Gastrocnemius medialis (tissue), 4 donors: ENCODE measurements at regions of chr4 and their contacts with region 1.

Region 1: DNA sequence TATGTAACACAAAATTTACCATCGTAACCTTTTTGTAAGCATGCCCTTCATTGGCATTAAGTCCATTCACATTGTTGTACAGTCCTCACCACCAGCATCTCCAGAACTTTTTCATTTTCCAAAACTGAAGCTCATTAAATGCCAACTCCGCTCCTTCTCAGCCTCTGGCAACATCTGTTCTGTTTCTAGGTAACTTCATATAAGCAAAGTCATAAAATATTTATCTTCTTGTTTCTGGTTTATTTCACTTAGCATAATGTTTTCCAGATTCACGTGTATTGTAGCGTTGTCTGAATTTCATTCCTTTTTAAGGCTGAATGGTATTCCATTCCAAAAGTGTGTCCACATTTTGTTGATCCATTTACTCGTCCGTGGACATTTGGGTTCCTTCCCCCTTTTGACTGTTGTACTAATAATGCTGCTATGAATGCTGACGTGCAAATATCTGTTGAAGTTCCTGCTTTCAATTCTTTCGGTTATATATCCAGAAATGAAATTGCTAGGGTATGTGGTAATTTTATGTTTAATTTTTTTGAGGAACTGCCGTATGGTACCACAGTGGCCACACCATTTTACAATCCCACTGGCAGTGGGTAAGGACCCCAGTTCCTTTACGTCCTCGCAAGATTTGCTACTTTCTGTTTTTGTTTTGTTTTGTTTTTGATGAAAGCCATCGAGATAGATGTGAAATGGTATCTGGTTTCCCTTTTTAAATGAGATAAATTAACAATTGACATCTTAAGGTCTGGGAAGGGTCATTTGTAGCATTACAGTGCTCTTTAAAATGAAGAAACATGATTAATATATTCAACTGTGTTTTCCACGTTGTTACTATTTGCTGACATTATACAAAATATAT is 63.4 kb downstream of the PTTG2 start:
- DNase-seq: no peak
- ATAC-seq: no peak
- H3K4me3 ChIP-seq: no peak overlapping the region
- H3K27ac ChIP-seq: no peak overlapping the region
- H3K4me1 ChIP-seq: no peaks in the 10 kb centered on the region
- H3K27me3 ChIP-seq: no peaks in the 10 kb centered on the region
- CTCF ChIP-seq: no peak
- POLR2A ChIP-seq: no peak

Region 2: GRCh38 chr4:36990128-36990872 is 1033.3 kb before region 1 on chr4:
- in situ Hi-C with region 1: no loop called
- intact Hi-C with region 1: loop called (anchors 10 kb)
- DNase-seq: no peak
- ATAC-seq: no peak
- H3K4me3 ChIP-seq: no peak overlapping the region
- H3K27ac ChIP-seq: no peak overlapping the region
- H3K4me1 ChIP-seq: no peaks in the 10 kb centered on the region
- H3K27me3 ChIP-seq: no peaks in the 10 kb centered on the region
- CTCF ChIP-seq: no peak
- POLR2A ChIP-seq: no peak